Naive thymus-derived CD4-positive, alpha-beta T cell (primary cell): ENCODE measurements at regions of chr3 and their contacts with region 1.

Region 1: GRCh38 chr3:167712445-167712844 is 22.2 kb downstream of the PDCD10 start:
- DNase-seq: no peak
- ATAC-seq: no peak
- H3K4me3 ChIP-seq: no peak overlapping the region
- H3K4me3 Mint-ChIP-seq: peak overlapping the region in 4 of 10 donors; percentile 8 to 37 (median 23)
- H3K27ac ChIP-seq: no peak overlapping the region
- H3K27ac Mint-ChIP-seq: peak overlapping the region in 3 of 9 donors; percentile 26 to 88 (median 52)
- H3K4me1 ChIP-seq: peaks cover 0 to 5% of the 10 kb centered on the region in 2 donors
- H3K4me1 Mint-ChIP-seq: peaks cover 33 to 85% (median 77%) of the 10 kb centered on the region in 7 donors
- H3K27me3 ChIP-seq: no peaks in the 10 kb centered on the region
- H3K27me3 Mint-ChIP-seq: no peaks in the 10 kb centered on the region

Region 2: DNA sequence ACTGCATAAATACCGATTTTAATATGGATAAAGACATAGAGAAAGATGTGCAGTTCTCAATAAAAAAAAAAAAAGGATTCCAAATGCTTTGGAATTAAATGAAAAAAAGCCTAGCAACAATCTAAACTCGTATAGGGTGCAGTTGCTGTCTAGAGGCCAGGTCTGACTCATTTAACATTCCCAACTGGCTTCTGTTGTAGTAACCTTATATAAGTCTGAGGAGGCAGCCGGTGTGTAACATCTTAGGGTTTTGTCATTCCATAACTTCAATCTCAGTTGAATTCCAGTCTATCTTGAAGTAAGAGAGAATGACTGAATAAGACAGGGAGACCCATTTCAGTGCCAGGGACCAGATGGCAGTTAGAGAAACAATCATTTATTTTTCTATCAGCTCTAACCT is 15.7 kb after region 1 on chr3:
- CTCF ChIA-PET with region 1: no interaction called
- POLR2A ChIA-PET with region 1: no interaction called
- intact Hi-C with region 1: loop called in 1 of 2 experiments (anchors 2 kb)
- DNase-seq: no peak
- ATAC-seq: no peak
- H3K4me3 ChIP-seq: no peak overlapping the region
- H3K4me3 Mint-ChIP-seq: peak overlapping the region in 1 of 10 donors; percentile 0
- H3K27ac ChIP-seq: no peak overlapping the region
- H3K27ac Mint-ChIP-seq: peak overlapping the region in 2 of 9 donors; percentile 26 to 38
- H3K4me1 ChIP-seq: peaks cover 13 to 18% of the 10 kb centered on the region in 2 donors
- H3K4me1 Mint-ChIP-seq: peaks cover 41 to 73% (median 61%) of the 10 kb centered on the region in 7 donors
- H3K27me3 ChIP-seq: no peaks in the 10 kb centered on the region
- H3K27me3 Mint-ChIP-seq: no peaks in the 10 kb centered on the region

Region 3: DNA sequence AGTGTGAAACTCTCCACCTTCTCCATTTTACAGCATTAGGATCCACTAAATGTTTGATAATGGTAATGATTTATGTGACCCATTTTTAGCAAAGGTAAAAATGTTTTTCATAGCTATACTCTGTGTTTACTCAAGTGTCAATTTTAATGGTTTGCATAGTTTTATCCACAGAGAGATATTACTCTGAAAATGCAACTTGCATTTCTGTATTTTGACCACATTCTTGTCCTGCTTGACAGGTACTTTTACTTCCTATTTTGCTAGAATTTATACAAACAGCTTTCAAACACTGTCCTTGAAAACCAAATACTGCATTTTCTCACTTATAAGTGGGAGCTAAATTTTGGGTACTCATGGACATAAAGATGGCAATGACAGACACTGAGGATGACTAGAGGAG is 86.0 kb after region 1 on chr3:
- CTCF ChIA-PET with region 1: no interaction called
- POLR2A ChIA-PET with region 1: no interaction called
- intact Hi-C with region 1: no loop called
- DNase-seq: no peak
- ATAC-seq: no peak
- H3K4me3 ChIP-seq: no peak overlapping the region
- H3K4me3 Mint-ChIP-seq: peak overlapping the region in 1 of 10 donors; percentile 27
- H3K27ac ChIP-seq: no peak overlapping the region
- H3K27ac Mint-ChIP-seq: no peak overlapping the region
- H3K4me1 ChIP-seq: no peaks in the 10 kb centered on the region
- H3K4me1 Mint-ChIP-seq: no peaks in the 10 kb centered on the region
- H3K27me3 ChIP-seq: no peaks in the 10 kb centered on the region
- H3K27me3 Mint-ChIP-seq: no peaks in the 10 kb centered on the region

Region 4: GRCh38 chr3:168865022-168865551 is 1152.6 kb after region 1 on chr3:
- CTCF ChIA-PET with region 1: no interaction called
- POLR2A ChIA-PET with region 1: no interaction called
- intact Hi-C with region 1: no loop called
- DNase-seq: no peak
- ATAC-seq: no peak
- H3K4me3 ChIP-seq: no peak overlapping the region
- H3K4me3 Mint-ChIP-seq: no peak overlapping the region
- H3K27ac ChIP-seq: no peak overlapping the region
- H3K27ac Mint-ChIP-seq: no peak overlapping the region
- H3K4me1 ChIP-seq: no peaks in the 10 kb centered on the region
- H3K4me1 Mint-ChIP-seq: peaks cover 0 to 1% (median 0%) of the 10 kb centered on the region in 7 donors
- H3K27me3 ChIP-seq: no peaks in the 10 kb centered on the region
- H3K27me3 Mint-ChIP-seq: no peaks in the 10 kb centered on the region